BJ (cell line): ENCODE measurements at regions of chr2 and their contacts with region 1.

Region 1: DNA sequence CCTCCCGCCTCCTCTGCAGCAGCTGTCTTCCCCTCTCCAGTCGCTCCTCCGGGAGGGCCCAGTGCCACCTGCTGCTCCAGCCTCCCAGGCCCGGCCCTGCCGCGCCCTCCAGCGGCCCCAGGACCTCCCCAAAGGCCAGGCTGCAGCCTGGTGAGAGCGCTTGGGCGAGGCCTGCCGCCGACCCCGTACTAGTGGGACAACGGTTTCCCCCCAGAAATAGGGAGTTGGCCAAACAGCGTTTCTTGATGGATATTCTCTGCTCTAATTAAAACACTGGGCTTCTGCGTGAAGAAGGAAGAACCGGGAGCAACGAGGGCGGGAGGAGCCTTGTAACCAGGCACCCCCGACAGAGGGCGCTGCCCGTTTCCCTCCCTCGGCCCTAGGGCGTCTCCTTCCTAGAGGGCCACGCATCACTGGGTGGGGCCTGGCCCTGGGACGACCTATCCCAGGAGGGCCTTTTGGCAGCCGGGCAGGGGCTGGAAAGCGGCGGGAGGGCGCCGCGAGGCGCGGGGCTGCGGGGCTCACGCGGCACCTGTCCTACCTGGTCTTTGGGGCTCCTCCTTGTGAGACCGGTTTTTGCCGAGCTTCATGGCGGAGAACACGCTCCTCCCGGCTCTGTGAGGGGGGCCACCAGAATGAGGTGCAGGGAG is 25.4 kb upstream of the OTOF start:
- DNase-seq: no peak
- H3K4me3 ChIP-seq: peak overlapping the region; percentile 29
- H3K27me3 ChIP-seq: peaks cover 24% of the 10 kb centered on the region
- CTCF ChIP-seq: peak; percentile 90

Region 2: GRCh38 chr2:26088032-26088643 is 415.2 kb before region 1 on chr2:
- CTCF ChIA-PET with region 1: no interaction called
- POLR2A ChIA-PET with region 1: no interaction called
- DNase-seq: no peak
- H3K4me3 ChIP-seq: no peak overlapping the region
- H3K27me3 ChIP-seq: no peaks in the 10 kb centered on the region
- CTCF ChIP-seq: peak; percentile 69

Region 3: DNA sequence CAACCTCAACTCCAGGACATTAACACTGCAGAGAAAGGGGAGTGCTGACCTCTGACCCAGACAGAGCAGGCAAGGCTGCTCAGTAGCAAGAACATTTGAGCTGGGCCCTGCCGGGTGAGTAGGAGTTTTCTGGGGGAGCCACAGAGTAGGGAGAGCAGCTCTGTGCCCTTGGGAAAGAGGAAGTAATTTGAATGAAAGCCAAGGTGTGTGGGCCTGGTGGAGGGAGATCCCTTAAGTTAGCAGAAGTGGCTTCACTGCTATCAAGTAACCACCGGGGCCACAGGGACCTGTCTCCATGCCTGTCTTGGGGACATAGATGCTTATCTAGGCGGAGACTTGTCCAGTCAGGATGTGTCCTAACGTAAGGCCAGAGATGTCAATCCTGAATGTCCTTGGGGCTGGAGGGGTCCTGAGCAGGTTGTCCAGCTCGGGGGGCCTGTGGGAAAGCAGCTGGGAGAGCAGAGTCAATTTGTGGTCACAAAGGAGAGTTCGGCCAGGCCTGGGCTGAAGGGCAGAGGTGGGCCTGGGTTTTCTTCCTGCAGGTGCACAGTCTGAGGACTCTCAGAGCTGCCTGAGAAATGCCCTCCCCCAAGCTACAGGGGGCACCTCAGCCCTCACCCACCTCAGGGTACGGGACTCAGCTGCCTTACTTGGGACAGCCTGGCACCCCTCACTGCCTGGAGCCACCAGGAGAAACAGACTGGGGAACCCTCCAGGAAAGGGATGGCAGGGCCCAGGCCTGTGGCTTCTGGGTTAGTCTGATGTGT is 10.4 kb before region 1 on chr2:
- CTCF ChIA-PET with region 1: interaction called, 12 read pairs
- POLR2A ChIA-PET with region 1: no interaction called
- DNase-seq: no peak
- H3K4me3 ChIP-seq: no peak overlapping the region
- H3K27me3 ChIP-seq: peaks cover 3% of the 10 kb centered on the region
- CTCF ChIP-seq: no peak

Region 4: GRCh38 chr2:26516246-26516645 is 12.9 kb after region 1 on chr2:
- CTCF ChIA-PET with region 1: interaction called, 27 read pairs
- POLR2A ChIA-PET with region 1: no interaction called
- DNase-seq: no peak
- H3K4me3 ChIP-seq: no peak overlapping the region
- H3K27me3 ChIP-seq: peaks cover 20% of the 10 kb centered on the region
- CTCF ChIP-seq: no peak

Region 5: GRCh38 chr2:26942543-26943295 is 439.4 kb after region 1 on chr2:
- CTCF ChIA-PET with region 1: no interaction called
- POLR2A ChIA-PET with region 1: no interaction called
- DNase-seq: no peak
- H3K4me3 ChIP-seq: no peak overlapping the region
- H3K27me3 ChIP-seq: peaks cover 15% of the 10 kb centered on the region
- CTCF ChIP-seq: peak; percentile 84